ENCODE measurements at regions of chr5 and their contacts with region 1.

Region 1: DNA sequence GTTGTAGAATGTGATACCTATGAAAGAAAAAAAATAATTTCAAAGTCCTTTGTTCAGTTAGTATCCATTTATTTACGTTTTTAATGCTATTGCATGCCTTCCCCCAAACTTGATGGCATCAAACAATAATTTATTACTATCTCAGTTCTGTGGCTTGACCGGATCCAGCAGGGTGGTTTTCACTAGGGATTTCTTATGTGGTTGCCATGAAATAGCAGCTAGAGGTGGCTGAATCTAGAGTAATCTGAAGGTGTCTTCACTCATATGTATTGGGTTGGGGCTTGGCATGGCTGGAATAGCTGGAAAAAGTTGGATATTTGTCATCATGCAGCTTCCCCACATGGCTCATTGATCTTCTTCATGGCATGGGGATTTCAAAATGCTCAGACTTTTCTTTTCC is 619.3 kb upstream of the ZNF608 start:
- DNase-seq: no peak
- ATAC-seq: no peak
- H3K4me3 Mint-ChIP-seq: no peak overlapping the region
- H3K27ac Mint-ChIP-seq: no peak overlapping the region
- H3K4me1 Mint-ChIP-seq: no peaks in the 10 kb centered on the region
- H3K27me3 Mint-ChIP-seq: no peaks in the 10 kb centered on the region
- CTCF ChIP-seq: no peak

Region 2: DNA sequence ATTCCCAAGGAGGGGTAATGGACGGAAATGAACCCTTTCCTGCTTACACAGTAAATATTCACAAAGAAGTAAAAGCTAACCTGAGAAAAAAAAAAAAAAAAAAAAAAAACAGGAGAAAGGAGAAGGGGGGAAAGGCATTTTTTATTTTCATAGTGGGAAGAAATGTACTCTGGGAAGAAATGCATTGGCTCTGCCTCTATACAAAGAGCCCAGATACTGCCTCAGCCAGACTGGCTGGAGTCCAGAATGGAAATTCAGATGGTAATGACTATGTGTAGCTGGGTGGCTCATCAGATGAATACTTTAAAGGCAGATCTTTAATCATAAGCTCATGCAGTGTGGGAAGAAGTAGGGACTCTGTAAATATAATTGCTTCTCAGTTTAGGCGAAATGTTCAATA is 494.4 kb before region 1 on chr5:
- CTCF ChIA-PET with region 1: no interaction called
- POLR2A ChIA-PET with region 1: interaction called, 11 read pairs
- intact Hi-C with region 1: no loop called
- DNase-seq: no peak
- ATAC-seq: no peak
- H3K4me3 Mint-ChIP-seq: no peak overlapping the region
- H3K27ac Mint-ChIP-seq: no peak overlapping the region
- H3K4me1 Mint-ChIP-seq: peaks cover 9% of the 10 kb centered on the region
- H3K27me3 Mint-ChIP-seq: no peaks in the 10 kb centered on the region
- CTCF ChIP-seq: no peak

Region 3: DNA sequence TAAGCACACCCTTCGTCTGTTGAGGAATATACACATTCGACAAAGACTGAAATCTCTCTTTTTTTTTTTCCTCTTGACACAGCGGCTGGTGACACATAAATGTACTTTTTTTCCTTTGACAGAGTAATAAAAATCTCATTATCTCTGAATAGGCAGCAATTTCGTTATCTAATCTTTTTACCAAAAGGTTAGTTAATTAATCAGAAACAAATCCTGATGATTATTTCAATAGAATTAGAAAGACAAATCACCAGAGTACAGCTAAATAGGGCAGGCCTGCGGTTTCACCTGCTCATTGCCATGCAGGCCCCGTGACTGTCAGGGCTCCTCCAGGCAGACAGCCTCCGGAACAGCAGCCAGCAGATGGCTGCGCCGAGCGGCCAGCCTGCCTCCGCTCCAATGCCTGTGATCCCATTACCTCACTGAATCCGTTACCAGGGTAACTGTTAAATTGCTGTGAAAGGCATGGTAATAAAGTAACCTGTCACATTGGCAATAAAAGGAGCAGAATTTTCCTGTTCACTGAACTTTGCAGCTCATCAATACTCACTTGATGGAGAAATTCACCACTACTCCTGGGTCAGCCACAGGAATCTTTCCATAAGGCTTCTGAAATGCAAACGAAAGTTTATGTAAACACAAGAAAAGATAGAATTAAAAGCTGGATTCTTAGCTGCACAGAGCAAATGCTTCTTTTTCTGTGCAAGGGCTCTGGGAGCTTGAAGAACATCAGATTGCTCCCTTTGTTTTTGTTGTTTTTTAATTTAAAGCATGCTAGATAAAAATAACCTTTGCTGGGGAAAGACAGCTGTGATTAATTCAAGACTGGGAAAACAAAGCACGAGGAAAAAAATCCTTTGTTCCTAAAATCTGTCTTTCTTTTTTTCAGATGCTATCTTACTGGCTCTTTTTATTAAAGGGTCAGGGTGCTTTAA is 47.1 kb after region 1 on chr5:
- CTCF ChIA-PET with region 1: no interaction called
- POLR2A ChIA-PET with region 1: no interaction called
- intact Hi-C with region 1: no loop called
- DNase-seq: peak; percentile 18
- ATAC-seq: peak; percentile 72
- H3K4me3 Mint-ChIP-seq: peak overlapping the region; percentile 29
- H3K27ac Mint-ChIP-seq: no peak overlapping the region
- H3K4me1 Mint-ChIP-seq: peaks cover 38% of the 10 kb centered on the region
- H3K27me3 Mint-ChIP-seq: no peaks in the 10 kb centered on the region
- CTCF ChIP-seq: no peak

Measured in activated B cell treated with CpG ODN at 0.5 μM for 24 hours (primary cell).